Calu3 (cell line): ENCODE measurements at regions of chr6 and their contacts with region 1.

Region 1: DNA sequence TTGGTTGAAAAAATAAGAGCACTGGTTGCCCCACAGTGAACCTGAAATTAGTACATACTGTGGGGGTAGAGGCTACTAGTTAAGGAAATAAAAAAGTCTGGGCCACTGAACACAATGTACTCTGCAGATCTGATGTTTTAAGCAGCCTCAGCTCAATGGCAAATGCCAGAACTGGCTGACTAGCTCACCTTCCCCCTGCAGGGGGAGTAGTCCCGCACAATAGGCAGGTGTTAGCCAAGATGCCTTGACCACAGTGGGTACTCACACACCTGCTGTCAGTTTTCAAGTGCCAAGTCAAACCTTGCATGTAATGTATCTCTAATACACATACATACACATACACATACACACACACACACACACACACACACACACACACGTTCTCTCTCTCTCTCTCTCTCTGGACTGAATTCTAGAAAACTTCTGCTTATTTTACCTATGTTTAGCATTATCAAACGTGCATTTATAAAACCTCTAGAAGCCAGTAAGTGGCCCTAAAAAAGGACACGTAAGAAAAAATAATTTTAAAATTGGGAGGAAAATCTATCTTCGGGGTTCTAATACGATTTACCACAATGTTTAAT is 36.1 kb downstream of the GMDS start:
- DNase-seq: peak; percentile 73
- H3K4me3 Mint-ChIP-seq: no peak overlapping the region
- H3K27ac Mint-ChIP-seq: no peak overlapping the region
- H3K4me1 Mint-ChIP-seq: no peaks in the 10 kb centered on the region
- H3K27me3 Mint-ChIP-seq: no peaks in the 10 kb centered on the region
- CTCF ChIP-seq: peak; percentile 49

Region 2: DNA sequence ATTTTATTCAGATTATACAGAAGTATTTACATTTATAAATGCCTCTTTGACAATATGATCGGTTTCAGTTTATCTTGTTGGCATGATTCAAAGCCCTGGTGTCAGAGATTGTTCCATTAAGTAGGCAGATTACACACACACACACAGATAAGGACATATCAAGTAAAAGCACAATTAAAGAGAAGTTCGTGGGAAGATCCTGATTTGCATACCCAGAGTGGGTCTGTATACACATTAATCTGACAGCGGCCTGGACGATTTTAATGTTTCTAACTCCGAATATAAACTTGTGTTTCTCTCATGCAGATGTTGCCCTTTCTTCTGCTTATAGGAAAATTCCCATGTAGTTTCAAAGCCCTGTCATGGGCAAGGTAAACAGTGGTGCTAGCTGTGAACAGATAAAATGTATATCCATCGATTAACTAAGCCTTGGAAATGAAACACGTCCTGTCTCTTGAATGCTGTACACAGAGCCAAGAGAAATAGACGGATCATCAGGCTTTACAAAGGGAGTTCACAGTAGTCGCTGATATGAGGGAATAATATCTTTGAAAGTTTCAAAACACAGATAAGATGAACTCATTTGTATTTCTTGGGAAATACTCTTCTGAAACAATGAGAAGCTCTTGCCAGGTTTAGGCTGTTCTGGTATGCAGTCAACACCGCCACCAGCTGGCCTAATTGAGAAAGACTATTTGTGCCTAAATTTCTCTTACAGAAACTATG is 144.3 kb after region 1 on chr6:
- CTCF ChIA-PET with region 1: interaction called, 29 read pairs
- intact Hi-C with region 1: loop called (anchors 2 kb)
- DNase-seq: peak; percentile 68
- H3K4me3 Mint-ChIP-seq: no peak overlapping the region
- H3K27ac Mint-ChIP-seq: no peak overlapping the region
- H3K4me1 Mint-ChIP-seq: no peaks in the 10 kb centered on the region
- H3K27me3 Mint-ChIP-seq: no peaks in the 10 kb centered on the region
- CTCF ChIP-seq: peak; percentile 42

Region 3: GRCh38 chr6:2634139-2634964 is 425.0 kb after region 1 on chr6:
- CTCF ChIA-PET with region 1: interaction called, 6 read pairs
- intact Hi-C with region 1: loop called (anchors 2 kb)
- DNase-seq: peak; percentile 86
- H3K4me3 Mint-ChIP-seq: peak overlapping the region; percentile 70
- H3K27ac Mint-ChIP-seq: no peak overlapping the region
- H3K4me1 Mint-ChIP-seq: peaks cover 17% of the 10 kb centered on the region
- H3K27me3 Mint-ChIP-seq: peaks cover 8% of the 10 kb centered on the region
- CTCF ChIP-seq: peak; percentile 93

Region 4: GRCh38 chr6:3337521-3338350 is 1128.4 kb after region 1 on chr6:
- CTCF ChIA-PET with region 1: no interaction called
- intact Hi-C with region 1: no loop called
- DNase-seq: peak; percentile 20
- H3K4me3 Mint-ChIP-seq: peak overlapping the region; percentile 22
- H3K27ac Mint-ChIP-seq: no peak overlapping the region
- H3K4me1 Mint-ChIP-seq: peaks cover 18% of the 10 kb centered on the region
- H3K27me3 Mint-ChIP-seq: peaks cover 13% of the 10 kb centered on the region
- CTCF ChIP-seq: no peak